ENCODE measurements at regions of chrX and their contacts with region 1.

Region 1: GRCh38 chrX:71171110-71171801 is 26.6 kb downstream of the NLGN3 start:
- DNase-seq: no peak
- H3K4me3 ChIP-seq: no peak overlapping the region
- H3K27ac ChIP-seq: no peak overlapping the region
- H3K4me1 ChIP-seq: no peaks in the 10 kb centered on the region
- H3K27me3 ChIP-seq: no peaks in the 10 kb centered on the region
- CTCF ChIP-seq: no peak
- EP300 ChIP-seq: no peak
- POLR2A ChIP-seq: no peak

Region 2: DNA sequence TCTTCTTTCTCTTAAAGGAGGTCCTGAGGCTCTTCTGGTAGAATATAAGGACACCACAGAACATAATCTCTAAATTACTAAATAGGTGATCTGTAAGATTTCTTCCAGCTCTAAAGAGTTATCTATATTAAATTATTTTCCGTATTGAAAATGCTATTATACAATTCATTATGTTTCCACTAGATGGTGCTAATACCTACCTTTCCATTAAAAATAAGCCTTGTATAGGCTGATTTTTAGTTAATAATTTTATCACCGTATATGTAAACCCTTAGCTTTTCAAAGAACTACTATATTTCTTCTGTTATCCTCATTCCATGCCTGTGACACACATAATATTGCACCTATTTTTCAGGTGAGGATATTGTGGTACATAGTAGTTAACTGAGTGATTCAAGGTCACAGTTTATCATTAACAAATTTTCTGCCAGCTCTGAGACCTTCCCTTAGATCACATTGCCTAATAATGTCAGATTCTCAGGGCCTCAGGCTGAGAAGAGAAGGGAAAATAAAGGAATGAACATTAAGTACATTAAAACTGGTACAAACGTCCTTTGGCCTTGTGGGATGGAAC is 401.5 kb before region 1 on chrX:
- in situ Hi-C with region 1: loop called in 3 of 4 experiments (anchors 10 to 25 kb)
- intact Hi-C with region 1: no loop called
- DNase-seq: no peak
- H3K4me3 ChIP-seq: no peak overlapping the region
- H3K27ac ChIP-seq: no peak overlapping the region
- H3K4me1 ChIP-seq: no peaks in the 10 kb centered on the region
- H3K27me3 ChIP-seq: no peaks in the 10 kb centered on the region
- CTCF ChIP-seq: peak in 4 of 5 experiments; percentile 30 to 44 (median 34)
- EP300 ChIP-seq: no peak
- POLR2A ChIP-seq: no peak

Region 3: GRCh38 chrX:70998411-70999027 is 172.7 kb before region 1 on chrX:
- in situ Hi-C with region 1: loop called in 3 of 4 experiments (anchors 10 to 25 kb)
- intact Hi-C with region 1: no loop called
- DNase-seq: no peak
- H3K4me3 ChIP-seq: no peak overlapping the region
- H3K27ac ChIP-seq: no peak overlapping the region
- H3K4me1 ChIP-seq: no peaks in the 10 kb centered on the region
- H3K27me3 ChIP-seq: no peaks in the 10 kb centered on the region
- CTCF ChIP-seq: no peak
- EP300 ChIP-seq: no peak
- POLR2A ChIP-seq: no peak

Region 4: GRCh38 chrX:71910986-71911730 is 739.9 kb after region 1 on chrX:
- in situ Hi-C with region 1: no loop called
- intact Hi-C with region 1: no loop called
- DNase-seq: peak; percentile 9
- H3K4me3 ChIP-seq: peak overlapping the region; percentile 18 to 49 (median 29)
- H3K27ac ChIP-seq: peak overlapping the region; percentile 22 to 75 (median 44)
- H3K4me1 ChIP-seq: no peaks in the 10 kb centered on the region
- H3K27me3 ChIP-seq: peaks cover 19% of the 10 kb centered on the region
- CTCF ChIP-seq: peak in 3 of 5 experiments; percentile 6 to 15 (median 12)
- EP300 ChIP-seq: no peak
- POLR2A ChIP-seq: no peak